HepG2 (cell line): ENCODE measurements at regions of chr12 and their contacts with region 1.

Region 1: DNA sequence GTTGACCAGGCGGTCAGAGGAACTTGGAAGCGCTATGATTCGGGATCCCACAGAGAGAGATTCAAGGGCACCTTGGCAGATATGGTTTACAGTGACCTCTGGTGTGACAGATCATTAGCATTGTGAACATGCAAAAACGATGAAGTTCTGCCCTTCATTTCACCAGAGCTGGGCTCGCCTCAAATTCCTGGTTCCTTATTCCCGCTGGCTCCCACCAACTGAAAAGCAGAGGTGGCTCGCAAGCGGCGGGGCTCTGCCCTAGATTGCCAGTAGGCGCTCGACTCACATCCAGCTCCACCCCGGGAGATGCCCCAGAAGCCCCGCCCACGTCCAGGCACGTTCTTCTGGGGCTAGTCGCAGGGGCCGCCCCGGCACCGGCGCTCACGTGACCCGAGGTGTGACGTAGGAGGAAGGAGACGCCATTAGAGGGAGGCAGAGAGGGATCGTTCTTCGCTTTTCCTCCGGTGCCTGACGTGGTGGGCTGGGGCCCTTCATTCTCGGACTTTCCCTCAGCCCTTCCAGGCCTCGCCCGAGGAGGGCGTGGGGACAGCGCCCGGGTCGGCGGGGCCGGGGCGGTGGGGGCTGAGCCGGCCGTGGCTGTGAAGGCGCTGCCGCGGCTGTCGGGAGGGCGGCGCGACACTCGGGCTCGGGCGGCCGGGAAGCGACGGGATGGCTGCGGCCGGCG is at the start of gene RAB21:
- DNase-seq: peak; percentile 94
- ATAC-seq: peak; percentile 99
- H3K4me3 ChIP-seq: peak within 1 kb of the TSS; percentile 92 to 99 (median 97)
- H3K27ac ChIP-seq: peak within 1 kb of the TSS; percentile 83
- H3K4me1 ChIP-seq: peaks cover 40% of the 10 kb centered on the region
- H3K27me3 ChIP-seq: no peaks in the 10 kb centered on the region; a peak in 2 of 5 replicates
- CTCF ChIP-seq: peak; percentile 32
- EP300 ChIP-seq: 0 out of 4 replicates have a peak, but pooled peaks of 1 of the 2 experiments have one; percentile 7
- POLR2A ChIP-seq: peak; percentile 87 to 94
- RAD21 ChIP-seq: no peak; the same call in 1 of the 2 replicates
- total RNA-seq, gene RAB21: 50.9 and 61.4 TPM in 2 replicates

Region 2: DNA sequence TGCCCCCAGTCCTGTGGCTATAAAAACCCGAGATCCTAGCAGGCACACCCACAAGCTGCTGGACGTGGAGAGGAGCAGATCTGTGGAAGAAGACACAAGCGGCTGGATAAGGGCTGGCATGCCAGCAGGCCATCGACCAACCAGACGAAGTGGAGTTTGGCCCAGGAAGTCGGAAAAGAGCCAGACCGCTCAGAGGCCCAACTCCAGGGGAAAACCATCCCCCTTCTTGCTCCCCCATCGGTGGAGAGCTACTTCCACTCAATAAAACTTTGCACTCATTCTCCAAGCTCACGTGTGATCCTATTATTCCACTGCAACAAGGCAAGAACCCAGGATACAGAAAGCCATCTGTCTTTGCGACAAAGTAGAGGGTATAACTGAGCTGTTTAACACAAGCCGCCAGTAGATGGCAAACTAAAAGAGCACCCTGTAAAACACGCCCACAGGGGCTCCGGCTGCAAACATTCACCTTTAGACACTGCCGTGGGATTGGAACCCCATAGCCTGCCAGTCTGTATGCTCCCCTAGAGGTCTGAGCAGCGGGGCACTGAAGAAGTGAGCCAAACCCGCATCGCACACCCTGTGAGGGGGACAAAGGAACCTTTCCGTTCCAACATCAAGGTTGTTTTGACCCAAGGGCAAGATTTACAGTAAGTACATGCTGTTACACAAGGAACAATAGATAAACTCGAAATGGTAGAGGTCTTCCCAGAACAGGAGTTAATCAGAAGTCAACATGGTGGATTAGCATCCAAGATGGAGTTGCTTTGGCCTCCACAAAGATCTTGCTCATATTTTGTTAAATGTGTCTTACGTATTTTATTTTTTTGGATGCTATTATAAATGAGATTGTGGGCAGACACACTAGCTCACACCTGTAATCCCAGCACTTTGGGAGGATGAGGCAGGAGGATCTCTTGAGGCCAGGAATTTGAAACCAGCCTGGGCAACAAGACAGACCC is 22.6 kb before region 1 on chr12:
- CTCF ChIA-PET with region 1: no interaction called
- POLR2A ChIA-PET with region 1: interaction called, 14 read pairs
- in situ Hi-C with region 1: no loop called
- intact Hi-C with region 1: no loop called
- DNase-seq: peak; percentile 79
- ATAC-seq: peak; percentile 99
- H3K4me3 ChIP-seq: peak overlapping the region; percentile 49 to 72 (median 62)
- H3K27ac ChIP-seq: peak overlapping the region; percentile 62
- H3K4me1 ChIP-seq: peaks cover 19% of the 10 kb centered on the region
- H3K27me3 ChIP-seq: no peaks in the 10 kb centered on the region
- CTCF ChIP-seq: peak; percentile 73
- EP300 ChIP-seq: peak in 1 of 2 experiments; percentile 5; a peak in 1 of 4 replicates
- POLR2A ChIP-seq: peak; percentile 52 to 53; a peak in 3 of 4 replicates
- RAD21 ChIP-seq: peak; percentile 33; the same call in 1 of the 2 replicates